ENCODE measurements at regions of chr2 and their contacts with region 1.

Region 1: DNA sequence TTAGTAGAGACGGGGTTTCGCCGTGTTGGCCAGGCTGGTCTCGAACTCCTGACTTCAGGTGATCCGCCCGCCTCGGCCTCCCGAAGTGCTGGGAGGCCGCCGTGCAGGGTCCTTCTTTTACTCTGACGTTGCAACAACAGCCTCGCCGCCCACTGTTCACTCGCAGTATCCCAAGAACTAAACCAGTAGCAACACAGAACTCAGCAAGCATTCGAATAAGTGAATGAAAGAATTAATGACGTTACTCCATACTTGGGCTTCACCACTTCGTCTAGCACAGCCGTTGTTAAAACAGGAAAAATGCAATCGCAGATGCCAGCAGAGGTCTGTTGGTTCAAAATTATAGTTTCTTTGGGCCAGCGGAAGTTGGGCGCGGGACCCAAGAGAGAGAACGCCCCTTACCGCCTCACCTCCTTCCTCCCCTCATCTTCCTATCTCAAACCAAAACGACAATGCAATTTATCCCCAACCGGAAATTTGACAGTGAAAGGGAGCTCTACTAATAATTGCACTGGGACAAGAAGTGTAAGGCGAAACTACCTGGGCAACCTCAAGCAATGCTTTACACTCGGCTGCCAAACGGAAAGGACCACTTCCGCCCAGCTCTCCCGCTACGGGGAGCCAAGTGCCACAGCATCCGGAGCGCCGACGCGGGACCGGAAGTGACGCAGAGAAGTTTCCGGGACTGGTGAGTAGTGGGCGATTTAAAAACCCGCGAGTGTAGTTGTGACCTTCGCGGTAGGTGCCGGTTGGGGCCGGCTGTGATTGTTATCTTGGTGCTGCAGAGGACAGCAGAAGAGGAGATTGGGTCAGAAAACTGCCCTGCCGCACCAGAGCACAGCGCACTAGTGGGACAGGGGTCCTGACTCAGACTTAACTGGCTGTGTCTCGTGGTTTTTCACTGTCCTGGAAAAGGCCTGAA is at the starts of genes NIF3L1 and PPIL3:
- DNase-seq: peak; percentile 86 to 98 (median 96)
- ATAC-seq: peak; percentile 79 to 80
- H3K4me3 Mint-ChIP-seq: peak within 1 kb of the TSS; percentile 90 to 99 (median 96)
- H3K27ac Mint-ChIP-seq: peak within 1 kb of the TSS; percentile 94 to 100 (median 98)
- H3K4me1 Mint-ChIP-seq: peaks cover 28 to 64% (median 55%) of the 10 kb centered on the region in 4 donors
- H3K27me3 Mint-ChIP-seq: no peaks in the 10 kb centered on the region
- polyA plus RNA-seq, gene NIF3L1: 15.6 to 24.0 (median 18.7) TPM
- polyA plus RNA-seq, gene PPIL3: 22.3 to 38.3 (median 29.6) TPM

Region 2: DNA sequence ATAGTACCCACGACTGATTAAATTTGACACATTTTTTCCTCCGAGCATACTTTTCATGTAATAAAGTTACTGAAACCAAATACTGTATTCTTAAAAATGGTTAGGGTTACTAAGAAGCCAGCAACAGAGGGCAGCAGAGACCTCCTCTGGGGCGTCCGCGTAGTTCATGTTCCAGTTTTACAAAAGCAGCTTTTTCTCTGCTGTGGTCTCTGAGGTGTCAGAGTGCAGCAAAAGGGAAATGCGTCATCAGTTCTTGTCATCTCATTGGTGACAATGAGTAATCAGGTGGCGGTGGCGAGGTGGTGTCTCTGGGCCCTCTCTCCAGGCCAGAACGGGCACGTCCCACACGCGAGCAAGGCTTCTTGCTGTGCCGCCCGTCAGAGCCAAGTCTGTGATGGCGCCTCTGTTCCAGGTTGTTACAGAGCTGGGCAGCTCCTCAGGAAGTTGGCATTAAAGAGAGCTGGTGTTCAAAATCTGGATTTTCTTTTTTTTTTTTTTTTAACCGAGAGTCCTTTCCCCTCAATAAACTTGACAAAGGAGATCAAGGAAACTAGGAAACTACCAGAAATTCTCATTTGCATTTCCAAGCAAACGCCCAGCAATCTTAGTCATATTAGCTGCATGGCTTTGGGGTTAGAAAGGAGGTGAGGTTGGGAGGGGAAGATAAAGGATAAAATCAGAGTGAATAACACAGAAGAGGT is 175.8 kb before region 1 on chr2:
- POLR2A ChIA-PET with region 1: interaction called, 17 read pairs
- DNase-seq: peak; percentile 74 to 97 (median 90)
- ATAC-seq: peak; percentile 98 to 99
- H3K4me3 Mint-ChIP-seq: peak overlapping the region; percentile 75 to 90 (median 84)
- H3K27ac Mint-ChIP-seq: peak overlapping the region; percentile 98 to 100 (median 99)
- H3K4me1 Mint-ChIP-seq: peaks cover 2 to 18% (median 10%) of the 10 kb centered on the region in 4 donors
- H3K27me3 Mint-ChIP-seq: peaks cover 0 to 1% (median 0%) of the 10 kb centered on the region in 5 donors

Region 3: DNA sequence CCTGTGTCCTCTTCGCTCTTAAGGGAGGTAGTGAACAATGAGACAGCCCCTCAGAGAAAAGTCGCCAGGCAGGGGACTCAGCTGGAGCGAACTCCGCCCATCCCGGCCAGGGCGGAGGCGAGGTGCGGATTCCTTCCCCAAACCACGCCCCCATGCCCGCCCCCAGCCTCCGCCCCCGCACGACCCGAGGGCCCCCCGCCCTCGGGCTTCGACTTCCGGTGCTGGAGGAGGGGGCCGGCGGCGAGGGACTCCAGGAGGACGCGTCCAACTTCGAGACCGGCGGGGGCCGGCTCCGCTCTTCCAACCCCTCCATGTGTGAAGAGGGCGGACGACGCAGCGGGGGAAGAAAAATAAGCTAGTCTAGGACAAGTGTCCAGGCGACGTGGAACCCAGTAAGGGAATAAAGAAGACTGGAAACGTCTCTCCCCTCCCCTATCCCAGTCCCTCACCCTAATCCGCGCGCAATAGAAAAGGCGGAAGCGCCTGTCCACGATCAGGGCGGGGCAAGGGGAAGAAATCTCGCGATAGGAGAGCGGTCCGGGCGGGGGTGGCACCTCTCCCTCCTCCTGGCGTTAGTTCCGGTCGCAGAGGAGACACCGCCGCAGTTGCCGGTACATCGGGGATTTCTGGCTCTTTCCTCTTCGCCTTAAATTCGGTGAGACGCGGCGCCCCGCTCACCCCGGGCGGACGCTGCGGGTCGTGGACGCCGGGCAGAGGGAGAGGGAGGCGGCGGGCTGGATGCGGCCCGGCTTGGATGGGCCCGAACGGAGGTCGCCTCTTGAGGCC is 77.4 kb before region 1 on chr2 and contains the start of gene BZW1:
- POLR2A ChIA-PET with region 1: interaction called, 13 read pairs
- DNase-seq: peak; percentile 95 to 99 (median 98)
- ATAC-seq: peak; percentile 78 to 85
- H3K4me3 Mint-ChIP-seq: peak within 1 kb of the TSS; percentile 95 to 99 (median 98)
- H3K27ac Mint-ChIP-seq: peak within 1 kb of the TSS; percentile 94 to 99 (median 99)
- H3K4me1 Mint-ChIP-seq: peaks cover 26 to 52% (median 46%) of the 10 kb centered on the region in 4 donors
- H3K27me3 Mint-ChIP-seq: no peaks in the 10 kb centered on the region
- polyA plus RNA-seq, gene BZW1: 222 to 285 (median 243) TPM

Region 4: GRCh38 chr2:200950378-200950777 is 61.4 kb after region 1 on chr2:
- POLR2A ChIA-PET with region 1: no interaction called
- DNase-seq: no peak
- ATAC-seq: no peak
- H3K4me3 Mint-ChIP-seq: no peak overlapping the region
- H3K27ac Mint-ChIP-seq: peak overlapping the region in 1 of 10 donors; percentile 61
- H3K4me1 Mint-ChIP-seq: no peaks in the 10 kb centered on the region
- H3K27me3 Mint-ChIP-seq: no peaks in the 10 kb centered on the region

Region 5: GRCh38 chr2:200963124-200963917 is 74.4 kb after region 1 on chr2 and contains the start of gene ORC2:
- POLR2A ChIA-PET with region 1: interaction called, 14 read pairs
- DNase-seq: peak; percentile 85 to 99 (median 92)
- ATAC-seq: peak; percentile 93 to 94
- H3K4me3 Mint-ChIP-seq: peak within 1 kb of the TSS; percentile 95 to 99 (median 98)
- H3K27ac Mint-ChIP-seq: peak within 1 kb of the TSS; percentile 95 to 100 (median 99)
- H3K4me1 Mint-ChIP-seq: peaks cover 35 to 67% (median 60%) of the 10 kb centered on the region in 4 donors
- H3K27me3 Mint-ChIP-seq: no peaks in the 10 kb centered on the region
- polyA plus RNA-seq, gene ORC2: 9.4 to 11.1 (median 9.4) TPM

Region 6: GRCh38 chr2:201071479-201072200 is 182.7 kb after region 1 on chr2 and contains the starts of genes HYCC2 and NDUFB3:
- POLR2A ChIA-PET with region 1: interaction called, 15 read pairs
- DNase-seq: peak; percentile 84 to 97 (median 94)
- ATAC-seq: peak; percentile 93 to 94
- H3K4me3 Mint-ChIP-seq: peak within 1 kb of the TSS; percentile 93 to 99 (median 96)
- H3K27ac Mint-ChIP-seq: peak within 1 kb of the TSS; percentile 94 to 99 (median 98)
- H3K4me1 Mint-ChIP-seq: peaks cover 25 to 58% (median 50%) of the 10 kb centered on the region in 4 donors
- H3K27me3 Mint-ChIP-seq: peaks cover 0 to 2% (median 0%) of the 10 kb centered on the region in 5 donors
- polyA plus RNA-seq, gene HYCC2: 20.8 to 32.5 (median 23.0) TPM
- polyA plus RNA-seq, gene NDUFB3: 279 to 299 (median 298) TPM

Measured in naive thymus-derived CD8-positive, alpha-beta T cell (primary cell).